IMR-90 (cell line): ENCODE measurements at regions of chr11 and their contacts with region 1.

Region 1: DNA sequence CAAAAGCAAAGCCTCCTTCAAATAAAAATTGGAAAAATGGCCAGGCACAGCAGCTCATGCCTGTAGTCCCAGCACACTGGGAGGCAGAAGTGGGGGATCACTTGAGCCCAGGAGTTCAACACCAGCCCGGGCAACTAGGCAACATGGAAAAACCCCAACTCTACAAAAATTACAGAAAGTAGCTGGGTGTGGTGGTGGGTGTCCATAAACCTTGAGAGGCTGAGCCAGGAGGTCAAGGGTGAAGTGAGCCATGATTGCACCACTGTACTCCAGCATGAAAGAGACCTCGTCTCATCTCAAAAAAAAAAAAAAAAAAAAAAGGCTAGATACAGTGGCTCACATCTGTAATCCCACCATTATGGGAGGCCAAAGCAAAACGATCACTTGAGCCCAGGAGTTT is 22.3 kb downstream of the DDX6 start:
- DNase-seq: no peak
- ATAC-seq: no peak
- H3K4me3 ChIP-seq: no peak overlapping the region
- H3K27ac ChIP-seq: no peak overlapping the region
- H3K4me1 ChIP-seq: peaks cover 2% of the 10 kb centered on the region; the same call in 1 of the 2 replicates
- H3K27me3 ChIP-seq: no peaks in the 10 kb centered on the region
- CTCF ChIP-seq: no peak
- POLR2A ChIP-seq: no peak
- RAD21 ChIP-seq: no peak

Region 2: GRCh38 chr11:117720061-117720511 is 1048.6 kb before region 1 on chr11:
- CTCF ChIA-PET with region 1: no interaction called
- POLR2A ChIA-PET with region 1: no interaction called
- dilution Hi-C with region 1: no loop called
- in situ Hi-C with region 1: no loop called
- intact Hi-C with region 1: no loop called
- DNase-seq: no peak
- ATAC-seq: no peak
- H3K4me3 ChIP-seq: no peak overlapping the region
- H3K27ac ChIP-seq: no peak overlapping the region
- H3K4me1 ChIP-seq: no peaks in the 10 kb centered on the region
- H3K27me3 ChIP-seq: peaks cover 18% of the 10 kb centered on the region
- CTCF ChIP-seq: no peak
- POLR2A ChIP-seq: no peak
- RAD21 ChIP-seq: no peak

Region 3: DNA sequence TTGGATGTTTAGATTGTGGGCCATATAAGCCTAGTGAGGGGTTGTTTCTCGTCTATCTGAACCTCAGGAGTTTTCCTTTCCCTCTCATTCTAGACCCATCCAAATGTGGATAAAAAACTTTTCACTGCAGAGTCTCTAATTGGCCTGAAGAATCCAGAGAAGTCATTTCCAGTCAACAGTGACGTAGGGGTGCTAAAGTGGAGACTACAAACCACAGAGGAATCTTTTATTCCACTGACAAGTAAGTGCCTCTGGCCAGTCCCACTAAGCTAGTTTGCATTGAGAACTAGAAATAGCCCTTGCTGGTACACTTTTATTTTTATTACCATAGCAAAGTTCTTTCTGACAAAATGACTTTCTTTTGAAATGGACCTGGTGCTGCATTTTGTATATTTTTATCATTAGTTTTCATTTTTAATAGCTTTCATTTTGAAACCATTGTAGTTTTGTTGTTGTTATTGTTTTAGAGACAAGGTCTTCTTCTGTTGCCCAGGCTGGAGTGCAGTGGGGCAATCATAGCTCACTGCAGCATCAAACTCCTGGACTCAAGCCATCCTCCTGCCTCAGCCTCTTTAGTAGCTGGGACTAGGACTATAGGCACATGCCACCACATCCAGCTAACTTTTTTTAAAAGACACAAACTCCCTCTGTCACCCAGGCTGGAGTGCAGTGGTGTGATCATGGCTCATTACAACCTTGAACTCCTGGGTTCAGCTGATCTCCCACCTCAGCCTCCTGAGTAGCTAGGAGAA is 175.9 kb before region 1 on chr11:
- CTCF ChIA-PET with region 1: no interaction called
- POLR2A ChIA-PET with region 1: no interaction called
- dilution Hi-C with region 1: no loop called
- in situ Hi-C with region 1: no loop called
- intact Hi-C with region 1: loop called (anchors 5 kb)
- DNase-seq: no peak
- ATAC-seq: 0 out of 2 replicates have a peak, but pooled peaks have one; percentile 13
- H3K4me3 ChIP-seq: no peak overlapping the region
- H3K27ac ChIP-seq: no peak overlapping the region
- H3K4me1 ChIP-seq: peaks cover 2% of the 10 kb centered on the region; the same call in 1 of the 2 replicates
- H3K27me3 ChIP-seq: no peaks in the 10 kb centered on the region
- CTCF ChIP-seq: no peak
- POLR2A ChIP-seq: no peak
- RAD21 ChIP-seq: no peak

Region 4: GRCh38 chr11:118634431-118635236 is 134.1 kb before region 1 on chr11:
- CTCF ChIA-PET with region 1: no interaction called
- POLR2A ChIA-PET with region 1: no interaction called
- dilution Hi-C with region 1: no loop called
- in situ Hi-C with region 1: no loop called
- intact Hi-C with region 1: no loop called
- DNase-seq: peak; percentile 55
- ATAC-seq: peak; percentile 67
- H3K4me3 ChIP-seq: no peak overlapping the region
- H3K27ac ChIP-seq: peak overlapping the region; percentile 60; the same call in 1 of the 2 replicates
- H3K4me1 ChIP-seq: peaks cover 20% of the 10 kb centered on the region
- H3K27me3 ChIP-seq: no peaks in the 10 kb centered on the region
- CTCF ChIP-seq: no peak
- POLR2A ChIP-seq: no peak
- RAD21 ChIP-seq: no peak